Lower lobe of right lung (tissue), 2 donors: ENCODE measurements at regions of chr21 and their contacts with region 1.

Region 1: DNA sequence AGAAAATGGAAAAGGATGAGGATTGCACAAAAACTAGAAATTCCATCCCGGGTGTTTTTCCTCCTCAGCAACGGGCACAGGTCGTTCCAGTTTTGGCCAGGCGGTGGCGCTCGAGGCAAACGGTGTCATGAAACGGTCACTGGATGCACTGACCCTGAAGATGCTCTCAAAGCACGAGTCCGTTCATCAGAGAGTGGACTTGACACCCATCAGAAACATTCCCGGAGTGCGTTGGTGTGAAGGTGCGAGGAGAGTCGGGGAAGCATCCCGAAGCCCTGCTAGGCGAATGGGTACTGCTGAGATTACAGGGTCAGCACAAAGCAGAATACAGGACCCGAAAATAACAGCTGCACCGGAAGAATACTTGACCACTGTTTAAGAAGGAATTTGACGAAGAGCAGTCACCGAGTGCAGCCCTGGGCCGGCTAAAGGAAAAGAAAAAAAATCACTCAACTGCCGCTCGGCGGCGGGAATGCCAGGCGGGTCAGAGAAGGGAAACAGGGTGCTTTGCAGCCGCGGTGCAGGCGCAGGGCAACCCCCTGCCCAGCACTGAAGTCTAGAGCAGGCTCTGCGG is 71.7 kb upstream of the ETS2 start:
- DNase-seq: peak; percentile 89
- ATAC-seq: peak; percentile 95 to 96
- H3K4me3 ChIP-seq: peak overlapping the region; percentile 44
- H3K27ac ChIP-seq: peak overlapping the region; percentile 82
- H3K4me1 ChIP-seq: peaks cover 12% of the 10 kb centered on the region
- H3K27me3 ChIP-seq: no peaks in the 10 kb centered on the region
- CTCF ChIP-seq: peak; percentile 94

Region 2: GRCh38 chr21:39137248-39138178 is 403.5 kb after region 1 on chr21:
- intact Hi-C with region 1: loop called (anchors 5 kb)
- DNase-seq: no peak
- ATAC-seq: peak; percentile 20 to 28
- H3K4me3 ChIP-seq: no peak overlapping the region
- H3K27ac ChIP-seq: no peak overlapping the region
- H3K4me1 ChIP-seq: no peaks in the 10 kb centered on the region
- H3K27me3 ChIP-seq: no peaks in the 10 kb centered on the region
- CTCF ChIP-seq: no peak